Panc1 (cell line): ENCODE measurements at regions of chr1 and their contacts with region 1.

Region 1: GRCh38 chr1:237164406-237165352 is 122.7 kb downstream of the RYR2 start:
- DNase-seq: no peak
- ATAC-seq: no peak
- H3K4me3 ChIP-seq: no peak overlapping the region
- H3K27ac ChIP-seq: no peak overlapping the region
- H3K4me1 ChIP-seq: no peaks in the 10 kb centered on the region
- H3K27me3 ChIP-seq: no peaks in the 10 kb centered on the region; the same call in 1 of the 2 replicates
- CTCF ChIP-seq: no peak

Region 2: GRCh38 chr1:236830560-236830959 is 334.1 kb before region 1 on chr1:
- CTCF ChIA-PET with region 1: no interaction called
- POLR2A ChIA-PET with region 1: no interaction called
- in situ Hi-C with region 1: no loop called
- intact Hi-C with region 1: no loop called
- DNase-seq: no peak
- ATAC-seq: no peak
- H3K4me3 ChIP-seq: no peak overlapping the region
- H3K27ac ChIP-seq: no peak overlapping the region
- H3K4me1 ChIP-seq: no peaks in the 10 kb centered on the region
- H3K27me3 ChIP-seq: no peaks in the 10 kb centered on the region
- CTCF ChIP-seq: no peak

Region 3: GRCh38 chr1:237126180-237126579 is 38.5 kb before region 1 on chr1:
- CTCF ChIA-PET with region 1: no interaction called
- POLR2A ChIA-PET with region 1: no interaction called
- in situ Hi-C with region 1: no loop called
- intact Hi-C with region 1: loop called (anchors 1 kb)
- DNase-seq: no peak
- ATAC-seq: no peak
- H3K4me3 ChIP-seq: no peak overlapping the region
- H3K27ac ChIP-seq: no peak overlapping the region
- H3K4me1 ChIP-seq: no peaks in the 10 kb centered on the region; the same call in 1 of the 2 replicates
- H3K27me3 ChIP-seq: no peaks in the 10 kb centered on the region; the same call in 1 of the 2 replicates
- CTCF ChIP-seq: no peak